Activated B cell treated with CpG ODN at 0.5 μM for 24 hours (primary cell): ENCODE measurements at regions of chr6 and their contacts with region 1.

Region 1: DNA sequence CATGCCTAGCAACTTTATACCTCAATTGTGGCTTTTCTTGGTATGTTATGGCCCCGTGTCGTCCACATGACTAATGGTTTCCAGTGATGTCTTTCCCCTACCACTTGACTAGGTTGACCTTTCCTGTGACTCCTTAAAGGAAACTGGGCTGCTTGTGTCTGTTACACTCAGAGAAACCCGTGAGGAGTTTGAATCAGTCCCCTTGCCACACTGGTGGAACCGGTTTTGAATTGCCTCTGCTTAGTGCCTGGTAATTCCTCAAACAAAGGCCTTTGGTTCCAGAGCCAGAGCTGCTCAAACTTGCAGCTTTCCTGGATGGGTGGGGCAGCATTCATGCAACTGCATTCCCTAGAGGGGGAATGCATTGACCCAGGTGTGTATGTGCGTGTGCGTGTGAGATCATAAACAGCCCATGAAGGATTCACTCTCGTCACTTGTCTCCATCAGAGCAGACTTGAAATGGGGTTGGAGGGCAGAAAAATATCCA is 22.0 kb downstream of the ECT2L start:
- DNase-seq: no peak
- ATAC-seq: no peak
- H3K4me3 Mint-ChIP-seq: no peak overlapping the region
- H3K27ac Mint-ChIP-seq: peak overlapping the region; percentile 70
- H3K4me1 Mint-ChIP-seq: peaks cover 32% of the 10 kb centered on the region
- H3K27me3 Mint-ChIP-seq: no peaks in the 10 kb centered on the region
- CTCF ChIP-seq: no peak

Region 2: GRCh38 chr6:138795809-138796603 is 21.9 kb before region 1 on chr6 and contains the start of gene ECT2L:
- CTCF ChIA-PET with region 1: no interaction called
- POLR2A ChIA-PET with region 1: no interaction called
- intact Hi-C with region 1: no loop called
- DNase-seq: no peak
- ATAC-seq: no peak
- H3K4me3 Mint-ChIP-seq: no peak within 1 kb of the TSS
- H3K27ac Mint-ChIP-seq: no peak within 1 kb of the TSS
- H3K4me1 Mint-ChIP-seq: no peaks in the 10 kb centered on the region
- H3K27me3 Mint-ChIP-seq: peaks cover 11% of the 10 kb centered on the region
- CTCF ChIP-seq: no peak
- total RNA-seq, gene ECT2L: not detected in 2 replicates

Region 3: GRCh38 chr6:138912308-138912707 is 94.4 kb after region 1 on chr6:
- CTCF ChIA-PET with region 1: no interaction called
- POLR2A ChIA-PET with region 1: no interaction called
- intact Hi-C with region 1: loop called (anchors 5 kb)
- DNase-seq: no peak
- ATAC-seq: no peak
- H3K4me3 Mint-ChIP-seq: no peak overlapping the region
- H3K27ac Mint-ChIP-seq: no peak overlapping the region
- H3K4me1 Mint-ChIP-seq: peaks cover 6% of the 10 kb centered on the region
- H3K27me3 Mint-ChIP-seq: no peaks in the 10 kb centered on the region
- CTCF ChIP-seq: no peak

Region 4: DNA sequence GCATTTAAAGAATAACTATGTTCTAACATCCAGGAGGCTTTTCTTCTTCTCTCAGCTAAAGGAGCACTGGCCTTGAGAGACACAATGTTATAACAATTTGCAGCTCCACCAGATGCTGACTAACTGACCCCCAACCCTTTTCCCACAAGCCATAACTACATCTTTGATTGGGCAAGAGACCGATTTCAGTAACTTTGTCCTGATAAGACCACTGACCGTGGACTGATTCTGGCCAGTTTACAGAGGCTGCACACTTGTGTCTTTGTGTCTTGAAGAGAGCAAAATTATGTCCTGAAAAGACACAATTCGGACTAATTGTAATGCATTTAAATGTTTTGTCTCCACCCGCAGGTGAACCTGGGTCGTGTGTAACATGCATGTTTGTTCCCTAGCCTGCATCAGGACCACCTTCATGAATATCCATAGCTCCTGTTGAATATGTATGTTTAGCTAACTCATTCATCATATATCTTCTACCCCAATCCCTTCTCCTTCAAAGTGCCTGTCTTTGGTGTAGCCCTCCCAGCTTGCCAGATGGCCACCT is 233.0 kb after region 1 on chr6:
- CTCF ChIA-PET with region 1: no interaction called
- POLR2A ChIA-PET with region 1: no interaction called
- intact Hi-C with region 1: loop called (anchors 1 kb)
- DNase-seq: no peak
- ATAC-seq: no peak
- H3K4me3 Mint-ChIP-seq: no peak overlapping the region
- H3K27ac Mint-ChIP-seq: no peak overlapping the region
- H3K4me1 Mint-ChIP-seq: no peaks in the 10 kb centered on the region
- H3K27me3 Mint-ChIP-seq: no peaks in the 10 kb centered on the region
- CTCF ChIP-seq: no peak

Region 5: GRCh38 chr6:139109558-139109957 is 291.7 kb after region 1 on chr6:
- CTCF ChIA-PET with region 1: interaction called, 17 read pairs
- POLR2A ChIA-PET with region 1: no interaction called
- intact Hi-C with region 1: no loop called
- DNase-seq: no peak
- ATAC-seq: peak; percentile 34
- H3K4me3 Mint-ChIP-seq: no peak overlapping the region
- H3K27ac Mint-ChIP-seq: no peak overlapping the region
- H3K4me1 Mint-ChIP-seq: no peaks in the 10 kb centered on the region
- H3K27me3 Mint-ChIP-seq: no peaks in the 10 kb centered on the region
- CTCF ChIP-seq: no peak